A549 (cell line): ENCODE measurements at regions of chr14 and their contacts with region 1.

Region 1: GRCh38 chr14:38737686-38738407 is 365.2 kb downstream of the SEC23A start:
- DNase-seq: no peak
- ATAC-seq: no peak; a peak in 1 of 6 replicates
- H3K4me3 ChIP-seq: no peak overlapping the region
- H3K27ac ChIP-seq: no peak overlapping the region
- H3K4me1 ChIP-seq: no peaks in the 10 kb centered on the region
- CTCF ChIP-seq: no peak
- EP300 ChIP-seq: no peak
- POLR2A ChIP-seq: no peak
- RAD21 ChIP-seq: no peak

Region 2: DNA sequence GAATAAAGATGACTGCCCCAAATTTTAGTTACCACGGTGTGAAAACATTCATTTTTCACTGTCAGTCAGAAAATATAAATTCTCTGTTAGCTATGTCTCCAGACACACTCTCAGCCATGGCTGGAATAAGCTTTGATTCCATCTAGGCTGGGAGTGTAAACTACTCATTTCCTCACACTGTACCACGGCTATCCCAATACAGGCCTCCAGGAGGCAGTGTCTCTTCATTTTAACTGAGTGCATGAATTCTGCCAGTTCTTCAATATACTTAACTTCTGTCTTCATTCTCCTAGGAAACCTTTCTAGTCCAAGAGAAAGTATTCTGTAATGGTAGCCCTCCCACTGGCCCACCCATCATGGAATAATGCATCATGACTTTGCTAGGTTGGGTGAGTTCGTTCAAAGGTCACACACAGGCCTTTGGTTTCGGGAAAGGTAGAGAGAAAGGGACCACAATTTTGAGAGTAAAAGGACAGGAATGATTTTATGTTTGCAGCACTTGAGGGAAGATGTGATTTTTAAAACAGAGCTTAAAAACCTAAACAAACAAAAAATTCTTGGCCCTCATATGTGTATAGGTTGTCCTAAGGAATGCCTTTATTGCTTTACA is 15.9 kb before region 1 on chr14:
- CTCF ChIA-PET with region 1: interaction called, 15 read pairs
- POLR2A ChIA-PET with region 1: no interaction called
- DNase-seq: peak; percentile 18 to 46
- ATAC-seq: peak; percentile 85 to 93
- H3K4me3 ChIP-seq: no peak overlapping the region
- H3K27ac ChIP-seq: no peak overlapping the region
- H3K4me1 ChIP-seq: no peaks in the 10 kb centered on the region
- CTCF ChIP-seq: peak; percentile 56
- EP300 ChIP-seq: no peak
- POLR2A ChIP-seq: no peak
- RAD21 ChIP-seq: peak; percentile 62 to 78

Region 3: DNA sequence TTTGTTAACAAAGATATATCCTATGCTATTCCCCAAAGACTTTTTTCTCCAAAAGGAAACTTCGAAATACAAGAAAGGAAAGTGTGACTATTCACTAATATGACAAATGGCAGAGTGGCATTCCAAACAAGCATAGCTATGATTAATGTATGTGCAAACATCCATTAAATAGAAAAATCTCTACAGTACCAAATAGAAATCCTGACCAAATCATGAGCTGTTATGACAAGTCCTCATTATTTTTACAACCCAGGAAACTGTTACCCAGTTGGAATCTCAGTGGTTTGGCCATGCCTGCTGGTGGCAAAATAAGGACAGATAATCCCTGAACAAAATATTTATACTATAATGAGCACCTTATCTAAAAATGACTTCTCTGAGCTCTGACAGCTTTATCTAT is 163.0 kb after region 1 on chr14:
- CTCF ChIA-PET with region 1: no interaction called
- POLR2A ChIA-PET with region 1: no interaction called
- DNase-seq: no peak
- ATAC-seq: no peak
- H3K4me3 ChIP-seq: no peak overlapping the region
- H3K27ac ChIP-seq: no peak overlapping the region
- H3K4me1 ChIP-seq: no peaks in the 10 kb centered on the region
- CTCF ChIP-seq: no peak
- EP300 ChIP-seq: no peak
- POLR2A ChIP-seq: no peak
- RAD21 ChIP-seq: no peak

Region 4: DNA sequence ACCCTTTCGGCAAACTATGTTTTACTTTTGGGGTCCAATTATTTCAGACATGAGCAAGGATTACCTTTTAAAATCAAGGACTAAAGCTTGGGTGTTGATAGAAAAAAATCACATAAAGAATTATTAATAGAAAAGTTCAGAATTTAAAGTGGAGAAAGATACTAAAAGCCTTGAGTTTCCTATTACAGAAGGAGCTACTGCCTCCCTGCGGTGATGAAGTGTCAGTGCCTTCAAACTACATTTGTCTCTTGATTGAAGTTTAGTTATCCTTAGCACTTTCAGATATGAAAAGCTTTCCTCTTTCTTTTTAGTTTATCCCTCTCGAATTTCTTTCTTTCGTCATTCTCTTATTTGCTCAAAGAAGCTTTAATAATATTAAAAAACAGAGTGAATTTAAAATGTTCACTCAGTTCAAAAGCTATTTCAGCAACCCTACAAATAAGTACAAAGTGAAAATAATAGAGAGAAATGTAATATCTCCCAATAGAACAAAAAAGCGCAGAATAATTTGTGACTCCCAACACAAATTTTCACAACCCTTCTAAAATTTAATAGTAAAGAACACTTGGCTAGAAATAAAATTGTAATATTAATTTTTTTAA is 277.6 kb after region 1 on chr14:
- CTCF ChIA-PET with region 1: no interaction called
- POLR2A ChIA-PET with region 1: no interaction called
- DNase-seq: peak; percentile 46 to 64
- ATAC-seq: peak in 1 of 2 experiments; percentile 73; a peak in 3 of 6 replicates
- H3K4me3 ChIP-seq: no peak overlapping the region
- H3K27ac ChIP-seq: no peak overlapping the region
- H3K4me1 ChIP-seq: no peaks in the 10 kb centered on the region
- CTCF ChIP-seq: peak; percentile 78
- EP300 ChIP-seq: no peak
- POLR2A ChIP-seq: no peak
- RAD21 ChIP-seq: peak; percentile 68 to 77